Heart right ventricle (tissue), 16 donors: ENCODE measurements at regions of chr18 and their contacts with region 1.

Region 1: GRCh38 chr18:60134806-60135205 is 235.0 kb downstream of the PMAIP1 start:
- DNase-seq: no peak
- ATAC-seq: no peak
- H3K4me3 ChIP-seq: no peak overlapping the region
- H3K27ac ChIP-seq: no peak overlapping the region
- H3K4me1 ChIP-seq: no peaks in the 10 kb centered on the region
- H3K27me3 ChIP-seq: no peaks in the 10 kb centered on the region
- CTCF ChIP-seq: no peak

Region 2: GRCh38 chr18:59861963-59862819 is 272.6 kb before region 1 on chr18:
- intact Hi-C with region 1: no loop called
- DNase-seq: no peak
- ATAC-seq: no peak
- H3K4me3 ChIP-seq: no peak overlapping the region
- H3K27ac ChIP-seq: no peak overlapping the region
- H3K4me1 ChIP-seq: no peaks in the 10 kb centered on the region
- H3K27me3 ChIP-seq: peaks cover 0 to 60% (median 16%) of the 10 kb centered on the region in 7 donors
- CTCF ChIP-seq: no peak

Region 3: DNA sequence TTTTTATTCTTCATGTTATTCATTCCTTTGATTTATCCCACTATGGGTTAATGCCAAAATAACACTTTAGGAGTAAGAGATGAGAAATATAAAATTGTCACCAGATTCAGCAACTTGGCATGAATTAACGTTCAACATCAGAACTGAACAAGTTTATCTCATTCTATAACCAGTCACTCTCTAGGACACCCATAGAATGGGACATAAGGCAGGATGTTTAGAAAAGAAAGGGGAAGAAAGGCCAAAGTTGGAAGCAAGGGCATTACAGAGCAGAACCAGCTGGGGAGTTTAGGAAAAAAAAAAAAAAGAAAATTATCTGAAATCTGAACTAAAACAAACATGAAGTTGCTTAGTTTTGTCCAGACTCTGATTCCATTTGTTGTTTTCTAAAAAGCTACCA is 24.0 kb before region 1 on chr18:
- intact Hi-C with region 1: loop called in 1 of 10 experiments (anchors 2 kb)
- DNase-seq: no peak
- ATAC-seq: no peak
- H3K4me3 ChIP-seq: no peak overlapping the region
- H3K27ac ChIP-seq: no peak overlapping the region
- H3K4me1 ChIP-seq: no peaks in the 10 kb centered on the region
- H3K27me3 ChIP-seq: peaks cover 0 to 3% (median 0%) of the 10 kb centered on the region in 7 donors
- CTCF ChIP-seq: no peak